ENCODE measurements at regions of chr17 and their contacts with region 1.

Region 1: GRCh38 chr17:62008294-62008693 is 56.8 kb downstream of the MED13 start:
- DNase-seq: no peak
- ATAC-seq: no peak
- H3K4me3 ChIP-seq: no peak overlapping the region
- H3K27ac ChIP-seq: no peak overlapping the region
- H3K4me1 ChIP-seq: no peaks in the 10 kb centered on the region
- H3K27me3 ChIP-seq: no peaks in the 10 kb centered on the region
- CTCF ChIP-seq: no peak
- EP300 ChIP-seq: no peak
- POLR2A ChIP-seq: no peak
- RAD21 ChIP-seq: no peak

Region 2: DNA sequence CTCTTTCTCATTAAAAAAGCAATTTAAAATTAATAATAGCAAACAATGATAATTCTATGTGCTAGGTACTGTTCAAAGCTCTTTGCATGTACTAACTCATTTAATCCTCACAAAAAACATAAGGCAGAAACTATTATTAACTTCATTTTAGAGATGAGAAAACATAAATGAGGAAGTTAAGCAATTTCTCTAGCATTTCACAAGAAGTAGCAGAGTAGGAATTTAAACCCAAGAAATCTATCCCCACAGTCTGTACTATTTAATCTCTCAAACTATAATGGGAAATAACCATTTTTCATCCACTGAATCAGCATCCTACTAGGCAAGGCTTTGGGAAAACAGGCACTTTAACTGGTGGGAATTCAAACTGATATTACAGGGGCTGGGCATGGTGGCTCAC is 38.3 kb before region 1 on chr17:
- CTCF ChIA-PET with region 1: no interaction called
- POLR2A ChIA-PET with region 1: no interaction called
- in situ Hi-C with region 1: no loop called
- intact Hi-C with region 1: no loop called
- DNase-seq: no peak
- ATAC-seq: no peak
- H3K4me3 ChIP-seq: no peak overlapping the region
- H3K27ac ChIP-seq: no peak overlapping the region
- H3K4me1 ChIP-seq: no peaks in the 10 kb centered on the region
- H3K27me3 ChIP-seq: no peaks in the 10 kb centered on the region
- CTCF ChIP-seq: no peak
- EP300 ChIP-seq: no peak
- POLR2A ChIP-seq: no peak
- RAD21 ChIP-seq: no peak

Region 3: DNA sequence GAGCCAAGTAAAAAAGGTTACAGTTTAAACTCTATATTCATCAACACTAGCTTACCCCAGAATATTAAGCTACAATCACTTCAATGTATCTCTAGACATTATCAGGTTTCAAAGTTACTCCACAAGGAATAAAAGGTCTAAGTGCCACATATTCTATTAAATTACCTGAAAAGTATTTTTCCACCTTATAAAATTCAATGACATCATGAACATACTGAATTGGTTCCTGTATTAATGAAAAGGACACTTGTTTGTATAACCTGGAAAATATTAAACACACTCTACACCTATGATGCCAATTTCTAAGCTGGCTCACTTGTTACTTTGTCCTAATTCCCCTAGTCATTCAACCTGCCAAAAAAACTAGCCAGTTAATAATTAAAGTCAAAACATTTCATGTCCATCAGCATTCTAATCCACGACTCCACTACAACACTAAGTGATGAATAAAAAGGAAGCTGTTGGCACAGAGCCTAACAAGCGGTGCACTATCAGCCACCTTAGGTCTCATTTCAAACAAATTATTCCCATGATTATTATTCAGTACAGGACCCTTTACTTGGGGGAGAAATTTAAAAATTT is 44.6 kb after region 1 on chr17:
- CTCF ChIA-PET with region 1: no interaction called
- POLR2A ChIA-PET with region 1: no interaction called
- in situ Hi-C with region 1: loop called (anchors 5 kb)
- intact Hi-C with region 1: no loop called
- DNase-seq: no peak
- ATAC-seq: no peak
- H3K4me3 ChIP-seq: no peak overlapping the region
- H3K27ac ChIP-seq: no peak overlapping the region
- H3K4me1 ChIP-seq: peaks cover 56% of the 10 kb centered on the region
- H3K27me3 ChIP-seq: no peaks in the 10 kb centered on the region
- CTCF ChIP-seq: no peak
- EP300 ChIP-seq: no peak
- POLR2A ChIP-seq: no peak
- RAD21 ChIP-seq: no peak

Measured in HepG2 (cell line).